Cardiac septum (tissue), 1 donor: ENCODE measurements at regions of chr5 and their contacts with region 1.

Region 1: DNA sequence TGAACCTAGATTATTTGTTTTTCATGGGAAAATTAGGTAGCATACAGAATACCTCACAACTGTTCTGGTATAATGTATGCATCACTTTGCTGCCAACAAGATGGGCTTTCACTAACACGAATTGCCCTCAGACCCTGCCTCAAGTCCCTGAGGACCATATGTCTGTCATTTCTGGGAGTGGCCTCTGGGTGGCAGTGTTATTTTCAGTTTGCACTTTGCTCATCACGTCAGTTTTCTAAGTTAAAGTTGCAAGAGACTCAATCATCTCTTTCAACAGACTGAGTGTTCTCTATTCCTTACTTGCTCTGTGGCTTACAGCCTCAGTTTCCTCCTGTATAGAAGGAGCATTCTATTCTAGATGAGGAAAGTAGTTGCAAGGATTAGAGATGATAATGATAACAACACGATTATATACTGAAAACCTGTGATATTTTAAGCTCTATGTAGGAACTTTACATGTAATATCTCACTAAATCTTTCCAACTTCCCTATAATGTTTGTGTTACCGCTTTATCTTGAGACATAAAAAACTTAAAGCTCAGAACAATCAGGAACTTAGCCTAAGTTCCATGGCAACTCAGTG is 55.7 kb downstream of the TSSK1B start:
- DNase-seq: no peak

Region 2: GRCh38 chr5:113336975-113337374 is 42.1 kb before region 1 on chr5:
- intact Hi-C with region 1: loop called (anchors 5 kb)
- DNase-seq: no peak

Region 3: DNA sequence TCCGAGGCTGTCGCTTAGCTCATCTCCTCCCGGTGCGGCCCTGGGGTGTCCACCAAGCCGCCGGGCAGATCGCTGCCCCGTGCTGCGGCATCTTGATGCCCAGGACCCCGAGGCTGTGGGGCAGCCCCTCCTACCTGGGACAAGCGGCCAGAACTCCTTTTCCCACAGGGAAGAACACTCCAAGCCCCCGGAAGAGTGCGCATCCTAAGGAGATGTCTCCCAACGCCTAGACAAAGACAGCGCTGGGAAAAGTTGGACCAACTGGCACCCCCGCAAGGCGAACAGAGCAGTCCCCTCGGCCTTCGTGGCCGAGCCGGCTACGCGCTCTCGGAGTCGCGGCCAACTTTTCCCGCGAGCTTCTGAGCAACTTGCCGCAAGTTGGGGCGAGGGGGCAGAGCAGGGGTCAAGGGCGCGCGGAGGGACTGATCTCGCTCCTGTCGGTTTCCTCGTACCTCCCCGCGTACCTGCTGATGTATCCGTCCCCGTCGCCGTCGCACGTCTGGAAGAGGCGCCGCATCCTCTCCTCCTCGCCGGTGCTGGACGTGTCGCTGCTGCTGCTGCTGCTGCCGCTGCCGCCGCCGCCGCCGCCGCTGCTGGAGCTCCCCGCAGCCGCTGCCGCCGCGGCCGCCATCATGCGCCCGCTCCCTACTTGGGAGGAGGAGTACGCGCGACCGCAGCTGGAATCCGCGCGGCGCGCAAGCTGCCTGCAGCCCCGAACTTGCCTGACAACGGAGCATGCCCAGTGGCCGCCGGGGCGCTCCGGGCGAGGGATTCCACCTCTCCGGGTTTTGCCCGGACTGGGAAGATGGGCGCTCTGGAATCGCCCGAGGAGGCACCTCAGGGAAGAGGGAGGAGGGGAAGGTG is 109.0 kb after region 1 on chr5 and contains the start of gene MCC:
- intact Hi-C with region 1: loop called (anchors 5 kb)
- DNase-seq: peak; percentile 83
- total RNA-seq, gene MCC: 17.7 TPM

Region 4: DNA sequence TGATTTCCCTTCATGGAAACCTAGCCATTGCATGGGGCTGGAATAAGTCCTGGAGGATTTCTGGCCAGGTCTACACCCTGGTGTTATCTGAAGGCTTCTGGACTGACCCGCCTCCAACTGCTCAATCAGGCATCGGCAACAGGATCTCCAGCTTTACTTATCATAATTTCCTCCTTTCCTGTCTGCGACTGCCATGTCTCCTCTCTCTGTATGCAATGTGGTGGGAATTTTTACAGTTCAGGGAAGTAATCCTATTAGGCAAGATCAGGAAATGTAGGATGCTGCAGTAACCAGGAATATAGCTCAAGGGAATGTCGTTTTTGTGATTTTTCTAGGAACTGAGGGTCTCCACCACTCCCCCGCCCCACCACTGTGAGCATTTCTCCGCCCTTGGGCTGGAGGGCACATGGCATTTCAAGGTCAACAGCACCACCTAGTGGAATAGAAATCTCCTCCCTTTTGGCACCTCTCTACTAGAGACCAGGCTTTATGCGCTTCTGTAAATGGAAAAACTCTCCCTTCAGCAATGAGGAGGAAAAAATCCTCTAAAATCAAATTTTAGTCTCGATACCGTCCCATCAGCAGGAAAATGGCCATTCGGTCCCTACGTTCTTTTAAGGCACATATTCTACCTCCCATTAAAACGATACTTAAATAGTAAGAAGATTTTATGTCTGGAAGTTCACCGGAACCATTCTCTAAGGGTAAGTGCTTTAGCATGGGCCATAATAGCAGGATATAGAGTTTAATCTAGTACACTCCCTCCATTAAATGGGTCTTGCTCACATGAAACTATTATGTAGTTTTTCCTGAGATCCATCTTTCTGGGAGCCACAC is 227.5 kb after region 1 on chr5:
- intact Hi-C with region 1: loop called (anchors 5 kb)
- DNase-seq: no peak